Heart left ventricle (tissue), 16 donors: ENCODE measurements at regions of chr17 and their contacts with region 1.

Region 1: DNA sequence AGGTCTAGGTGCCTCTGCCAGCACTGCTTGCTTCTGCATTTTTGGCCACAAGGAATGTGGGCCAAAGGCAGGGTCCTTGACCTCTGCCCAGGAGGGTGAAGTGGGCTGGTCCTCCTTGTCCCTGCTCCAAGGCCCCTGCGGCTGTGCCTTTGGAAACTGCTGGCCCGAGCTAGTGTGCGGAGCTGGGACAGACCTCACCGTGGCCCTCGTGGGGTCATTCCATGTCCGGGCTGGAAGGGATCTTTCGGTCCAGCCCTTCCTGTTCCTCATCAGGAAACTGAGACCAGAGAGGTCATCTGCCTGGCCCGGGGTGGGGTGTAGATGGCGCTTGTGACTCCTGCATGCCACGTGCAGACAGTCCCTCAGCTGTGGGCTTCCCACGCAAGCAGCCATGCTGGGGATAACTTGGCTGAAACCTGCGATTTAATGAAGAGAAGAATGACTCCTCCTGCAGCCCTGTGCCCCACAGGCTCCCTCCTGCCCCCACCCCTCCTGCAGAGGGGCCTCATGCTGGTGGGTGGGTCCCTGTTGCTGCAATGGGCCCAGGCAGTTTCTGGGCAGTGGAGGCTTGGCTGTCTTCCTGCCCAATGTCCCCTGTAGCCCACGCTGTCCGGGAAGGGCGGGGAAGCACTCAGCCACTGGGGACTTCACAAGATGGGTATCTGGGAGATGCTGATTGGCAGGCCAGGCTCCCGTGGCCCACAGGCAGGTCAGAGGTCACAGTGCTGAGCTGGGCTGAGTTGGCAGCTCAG is 245.2 kb downstream of the SEC14L1 start:
- DNase-seq: peak in 4 of 5 donors; percentile 55 to 85 (median 69)
- ATAC-seq: peak in 3 of 4 donors; percentile 17 to 49 (median 36)
- H3K4me3 ChIP-seq: no peak overlapping the region
- H3K27ac ChIP-seq: peak overlapping the region; percentile 37 to 96 (median 83)
- H3K4me1 ChIP-seq: peaks cover 52 to 98% (median 93%) of the 10 kb centered on the region in 12 donors
- H3K27me3 ChIP-seq: no peaks in the 10 kb centered on the region
- CTCF ChIP-seq: no peak
- POLR2A ChIP-seq: no peak

Region 2: DNA sequence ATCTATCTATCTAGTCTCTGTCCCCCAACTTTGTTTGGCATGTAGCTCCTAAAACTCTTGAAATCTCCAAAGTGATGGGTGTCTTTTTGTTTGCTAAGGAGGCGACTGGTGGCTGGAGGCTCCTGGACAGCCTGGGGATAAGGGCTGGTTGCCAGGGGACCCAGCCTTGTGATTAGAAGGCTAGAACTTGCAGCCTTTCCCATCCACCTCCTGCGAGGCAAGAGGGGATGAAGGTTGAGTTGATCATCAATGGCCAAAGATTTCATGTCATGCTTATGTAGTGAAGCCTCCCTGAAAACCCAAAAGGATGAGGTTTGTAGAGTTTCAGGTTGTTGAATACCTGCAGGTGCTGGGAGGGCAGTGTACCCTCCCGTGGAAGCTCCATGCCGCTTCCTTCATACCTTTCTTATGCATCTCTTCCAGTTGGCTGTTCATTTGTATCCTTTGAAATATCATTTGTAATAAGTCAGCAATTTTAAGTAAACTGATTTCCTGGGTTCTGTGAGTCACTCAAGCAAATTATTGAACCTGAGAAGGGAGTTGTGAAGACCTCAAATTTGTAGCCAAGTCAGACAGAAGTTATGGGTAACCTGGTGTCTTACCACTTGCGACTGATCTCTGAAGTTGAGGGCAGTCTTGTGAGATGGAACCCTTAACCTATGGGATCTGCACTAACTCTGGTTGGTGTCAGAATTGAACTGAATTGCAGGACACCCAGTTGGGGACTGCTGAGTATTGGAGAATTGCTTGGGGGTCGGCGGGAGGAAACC is 42.7 kb before region 1 on chr17:
- intact Hi-C with region 1: loop called in 1 of 10 experiments (anchors 5 kb)
- DNase-seq: peak in 1 of 5 donors; percentile 2
- ATAC-seq: no peak
- H3K4me3 ChIP-seq: peak overlapping the region in 1 of 12 donors; percentile 23
- H3K27ac ChIP-seq: peak overlapping the region in 1 of 12 donors; percentile 83
- H3K4me1 ChIP-seq: peaks cover 0 to 38% (median 4%) of the 10 kb centered on the region in 12 donors
- H3K27me3 ChIP-seq: no peaks in the 10 kb centered on the region
- CTCF ChIP-seq: no peak
- POLR2A ChIP-seq: no peak

Region 3: DNA sequence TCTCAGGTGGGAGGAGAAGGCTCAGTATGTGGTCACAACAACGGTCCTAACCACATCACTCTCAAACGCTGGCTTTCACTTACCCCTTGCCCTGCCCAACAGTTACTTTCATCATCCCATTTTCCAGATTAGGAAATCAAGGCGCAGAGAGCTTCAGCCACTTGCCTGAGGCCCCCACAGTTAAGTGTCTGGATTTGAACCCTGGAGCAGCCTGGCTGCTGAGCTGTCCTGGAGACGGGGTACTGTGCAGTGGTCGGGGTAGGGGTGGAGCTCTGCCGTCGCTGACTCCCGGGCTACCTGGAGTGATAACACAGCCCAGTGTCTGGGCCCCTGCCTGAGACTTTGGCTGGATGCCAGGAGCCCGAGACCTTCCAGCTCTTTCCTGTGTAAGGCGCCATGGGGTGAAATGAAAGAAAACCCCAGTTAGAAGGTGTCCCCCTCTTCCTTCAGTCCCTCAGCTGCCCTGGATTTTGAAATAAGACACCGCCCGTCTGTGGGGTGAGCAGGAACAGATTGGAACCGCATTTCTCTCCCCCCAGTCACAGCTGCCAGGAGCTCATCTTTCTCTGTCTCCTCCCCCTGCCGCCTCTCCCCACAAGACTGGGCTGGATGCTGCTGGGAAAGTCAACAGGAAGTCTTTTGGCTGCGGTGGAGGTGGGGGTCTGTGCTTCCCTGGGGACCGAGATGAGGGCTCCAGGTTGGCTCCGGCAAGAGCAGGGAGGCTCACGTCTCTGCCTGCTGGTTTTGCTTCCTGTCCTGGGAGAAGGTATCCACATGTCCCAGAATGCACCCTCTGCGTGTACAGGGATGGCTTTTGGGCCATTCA is 35.1 kb after region 1 on chr17:
- intact Hi-C with region 1: loop called in 4 of 10 experiments (anchors 5 kb)
- DNase-seq: peak in 4 of 5 donors; percentile 66 to 73 (median 69)
- ATAC-seq: no peak
- H3K4me3 ChIP-seq: no peak overlapping the region
- H3K27ac ChIP-seq: peak overlapping the region in 11 of 12 donors; percentile 35 to 97 (median 58)
- H3K4me1 ChIP-seq: peaks cover 38 to 78% (median 68%) of the 10 kb centered on the region in 12 donors
- H3K27me3 ChIP-seq: no peaks in the 10 kb centered on the region
- CTCF ChIP-seq: no peak
- POLR2A ChIP-seq: no peak